CD8-positive, alpha-beta T cell (primary cell): ENCODE measurements at regions of chr6 and their contacts with region 1.

Region 1: DNA sequence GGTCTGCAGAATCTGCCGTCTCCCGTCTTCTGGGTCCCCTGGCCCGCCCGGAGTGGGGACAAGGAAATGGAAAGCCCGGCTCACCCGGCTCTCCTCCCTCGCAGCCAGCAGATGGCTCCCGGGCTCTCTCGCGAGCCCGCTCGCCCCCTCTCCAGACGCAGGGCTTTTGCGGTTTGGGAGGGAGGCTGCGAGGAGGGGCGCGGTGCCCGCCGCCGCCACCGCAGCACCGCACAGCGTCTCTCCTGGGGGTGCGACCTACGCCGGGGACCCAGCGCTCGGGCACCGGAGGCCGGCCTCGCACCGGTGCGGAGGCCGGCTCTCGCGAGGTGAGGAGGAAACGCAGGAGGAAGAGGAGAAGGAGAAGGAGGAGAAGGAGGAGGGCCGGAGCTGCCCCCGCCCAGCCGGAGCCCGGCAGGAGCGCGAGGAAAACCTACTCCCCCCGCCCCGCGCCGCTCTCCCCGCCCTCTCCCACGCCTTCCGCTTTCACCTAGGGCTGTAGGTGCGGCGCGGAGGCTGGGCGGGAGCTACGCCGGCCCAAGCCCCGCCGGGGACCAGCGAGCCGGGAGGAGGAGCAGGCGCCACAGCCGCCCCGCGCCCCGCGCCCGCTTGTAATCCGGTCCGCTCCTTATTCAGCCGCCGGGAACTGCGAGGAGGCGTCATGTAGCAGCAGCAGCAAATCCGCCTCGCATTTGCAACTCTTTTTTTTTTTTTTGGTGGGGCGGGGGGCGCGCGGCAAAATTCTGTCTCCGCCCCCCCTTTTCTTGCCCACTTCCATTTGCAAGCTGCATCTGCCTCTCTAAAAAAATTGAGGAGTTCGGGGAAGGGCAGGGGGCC is at the start of gene CARMIL1:
- DNase-seq: peak; percentile 28 to 85 (median 68)
- ATAC-seq: peak; percentile 71
- H3K4me3 ChIP-seq: peak within 1 kb of the TSS; percentile 55 to 73
- H3K4me3 Mint-ChIP-seq: peak within 1 kb of the TSS; percentile 94
- H3K27ac ChIP-seq: peak within 1 kb of the TSS in 1 of 2 experiments; percentile 54
- H3K27ac Mint-ChIP-seq: peak within 1 kb of the TSS; percentile 88
- H3K4me1 ChIP-seq: peaks cover 18% of the 10 kb centered on the region
- H3K4me1 Mint-ChIP-seq: peaks cover 37% of the 10 kb centered on the region
- H3K27me3 ChIP-seq: no peaks in the 10 kb centered on the region
- H3K27me3 Mint-ChIP-seq: peaks cover 3% of the 10 kb centered on the region
- CTCF ChIP-seq: peak; percentile 65
- total RNA-seq, gene CARMIL1: 5.0 to 6.1 TPM

Region 2: DNA sequence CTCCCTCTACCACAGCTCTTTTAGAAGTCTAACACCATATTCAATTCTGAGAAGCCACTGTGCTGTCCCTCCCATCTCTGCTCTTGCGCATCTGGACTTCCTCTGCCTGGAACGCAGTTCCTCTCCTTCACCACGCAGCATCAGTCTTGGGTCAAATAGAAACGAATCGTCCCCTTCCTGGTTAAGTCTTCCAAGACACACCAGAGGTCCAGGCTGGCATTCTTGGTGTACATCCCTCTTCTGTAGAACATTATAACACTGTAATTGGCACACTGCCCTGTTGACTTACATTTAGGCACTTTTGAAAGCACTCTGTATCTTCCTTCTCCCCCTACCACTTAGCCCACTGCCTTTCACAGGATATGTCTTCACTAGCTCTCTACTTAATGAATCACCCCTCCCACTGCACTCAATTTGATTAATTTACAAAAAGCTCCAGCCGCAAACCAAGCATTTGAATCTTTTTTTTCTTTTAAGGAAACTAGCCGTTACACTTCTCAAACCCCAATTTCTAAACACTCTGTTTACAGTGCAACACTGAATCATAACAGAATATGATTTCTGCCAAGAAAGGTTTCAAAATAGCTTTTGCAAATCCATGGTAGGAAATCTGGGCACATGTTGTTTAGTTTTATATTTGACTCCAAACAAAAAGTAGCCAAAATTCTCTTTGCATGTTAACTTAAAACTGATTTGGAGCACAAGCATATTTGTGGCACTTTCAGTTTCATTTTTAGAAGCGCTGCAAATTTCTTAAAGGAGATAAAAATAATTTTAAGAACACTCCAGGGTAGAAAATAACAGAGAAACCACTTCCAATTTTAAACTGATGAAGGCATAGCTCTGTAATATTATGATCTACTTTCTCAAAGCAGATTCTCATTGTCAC is 140.7 kb before region 1 on chr6:
- CTCF ChIA-PET with region 1: no interaction called
- POLR2A ChIA-PET with region 1: no interaction called
- intact Hi-C with region 1: loop called in 1 of 2 experiments (anchors 5 kb)
- DNase-seq: peak; percentile 8 to 88 (median 63)
- ATAC-seq: peak; percentile 90
- H3K4me3 ChIP-seq: peak overlapping the region; percentile 58 to 72
- H3K4me3 Mint-ChIP-seq: peak overlapping the region; percentile 89
- H3K27ac ChIP-seq: peak overlapping the region; percentile 70 to 85
- H3K27ac Mint-ChIP-seq: peak overlapping the region; percentile 93
- H3K4me1 ChIP-seq: peaks cover 25% of the 10 kb centered on the region
- H3K4me1 Mint-ChIP-seq: peaks cover 39% of the 10 kb centered on the region
- H3K27me3 ChIP-seq: no peaks in the 10 kb centered on the region
- H3K27me3 Mint-ChIP-seq: no peaks in the 10 kb centered on the region
- CTCF ChIP-seq: no peak

Region 3: DNA sequence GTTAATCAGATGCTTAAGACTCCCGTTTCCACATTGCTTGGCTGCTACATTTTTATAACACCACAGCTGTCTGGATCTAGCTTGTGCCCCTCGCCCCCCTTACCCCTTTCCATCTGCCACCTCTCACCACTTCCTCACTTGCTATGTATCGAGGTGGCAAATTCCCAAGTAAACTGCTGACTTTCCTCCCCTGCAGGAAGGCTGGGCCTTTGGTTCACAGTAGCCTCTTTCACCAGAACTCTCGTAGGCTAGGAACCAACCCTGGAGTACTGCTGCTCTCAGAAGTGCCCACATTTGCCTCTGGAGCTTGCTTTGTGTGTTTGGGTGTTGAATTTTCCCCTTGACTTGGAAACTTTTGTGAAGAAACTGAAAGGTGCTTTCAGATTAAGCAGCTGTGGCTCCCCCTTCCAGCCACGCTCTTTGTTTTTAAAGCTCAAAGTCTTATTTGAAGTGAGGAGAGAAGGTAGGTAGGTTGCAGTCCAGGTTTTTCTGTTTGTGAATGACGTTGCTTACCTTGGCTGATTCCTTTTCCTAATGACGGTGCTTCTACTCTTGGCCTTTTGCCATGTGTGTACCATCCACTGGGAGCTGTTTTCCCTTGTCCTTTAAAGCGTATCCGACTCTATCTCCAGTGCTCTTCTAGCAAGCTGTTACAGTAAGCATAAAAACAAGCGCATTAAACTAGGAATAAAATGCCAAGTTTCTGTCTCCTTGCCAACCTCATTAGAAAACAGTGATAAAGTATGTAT is 90.5 kb after region 1 on chr6:
- CTCF ChIA-PET with region 1: interaction called, 25 read pairs
- POLR2A ChIA-PET with region 1: interaction called, 15 read pairs
- intact Hi-C with region 1: loop called (anchors 1 to 2 kb)
- DNase-seq: peak in 6 of 9 experiments; percentile 8 to 56 (median 34)
- ATAC-seq: peak; percentile 16
- H3K4me3 ChIP-seq: peak overlapping the region in 1 of 2 experiments; percentile 10
- H3K4me3 Mint-ChIP-seq: peak overlapping the region; percentile 85
- H3K27ac ChIP-seq: peak overlapping the region; percentile 11 to 28
- H3K27ac Mint-ChIP-seq: peak overlapping the region; percentile 94
- H3K4me1 ChIP-seq: peaks cover 48% of the 10 kb centered on the region
- H3K4me1 Mint-ChIP-seq: peaks cover 81% of the 10 kb centered on the region
- H3K27me3 ChIP-seq: no peaks in the 10 kb centered on the region
- H3K27me3 Mint-ChIP-seq: no peaks in the 10 kb centered on the region
- CTCF ChIP-seq: no peak

Region 4: GRCh38 chr6:25404693-25405169 is 125.6 kb after region 1 on chr6:
- CTCF ChIA-PET with region 1: interaction called, 12 read pairs
- POLR2A ChIA-PET with region 1: interaction called, 11 read pairs
- intact Hi-C with region 1: no loop called
- DNase-seq: peak; percentile 2 to 77 (median 33)
- ATAC-seq: peak; percentile 89
- H3K4me3 ChIP-seq: peak overlapping the region; percentile 38
- H3K4me3 Mint-ChIP-seq: no peak overlapping the region
- H3K27ac ChIP-seq: peak overlapping the region; percentile 55 to 67
- H3K27ac Mint-ChIP-seq: no peak overlapping the region
- H3K4me1 ChIP-seq: peaks cover 36% of the 10 kb centered on the region
- H3K4me1 Mint-ChIP-seq: peaks cover 29% of the 10 kb centered on the region
- H3K27me3 ChIP-seq: no peaks in the 10 kb centered on the region
- H3K27me3 Mint-ChIP-seq: no peaks in the 10 kb centered on the region
- CTCF ChIP-seq: no peak

Region 5: GRCh38 chr6:25472306-25472705 is 193.2 kb after region 1 on chr6:
- CTCF ChIA-PET with region 1: interaction called, 10 read pairs
- POLR2A ChIA-PET with region 1: interaction called, 3 read pairs
- intact Hi-C with region 1: no loop called
- DNase-seq: no peak
- ATAC-seq: no peak
- H3K4me3 ChIP-seq: no peak overlapping the region
- H3K4me3 Mint-ChIP-seq: no peak overlapping the region
- H3K27ac ChIP-seq: no peak overlapping the region
- H3K27ac Mint-ChIP-seq: no peak overlapping the region
- H3K4me1 ChIP-seq: no peaks in the 10 kb centered on the region
- H3K4me1 Mint-ChIP-seq: no peaks in the 10 kb centered on the region
- H3K27me3 ChIP-seq: no peaks in the 10 kb centered on the region
- H3K27me3 Mint-ChIP-seq: no peaks in the 10 kb centered on the region
- CTCF ChIP-seq: peak; percentile 43

Region 6: GRCh38 chr6:25481277-25481676 is 202.1 kb after region 1 on chr6:
- CTCF ChIA-PET with region 1: interaction called, 157 read pairs
- POLR2A ChIA-PET with region 1: no interaction called
- intact Hi-C with region 1: no loop called
- DNase-seq: no peak
- ATAC-seq: no peak
- H3K4me3 ChIP-seq: no peak overlapping the region
- H3K4me3 Mint-ChIP-seq: no peak overlapping the region
- H3K27ac ChIP-seq: no peak overlapping the region
- H3K27ac Mint-ChIP-seq: no peak overlapping the region
- H3K4me1 ChIP-seq: no peaks in the 10 kb centered on the region
- H3K4me1 Mint-ChIP-seq: no peaks in the 10 kb centered on the region
- H3K27me3 ChIP-seq: no peaks in the 10 kb centered on the region
- H3K27me3 Mint-ChIP-seq: no peaks in the 10 kb centered on the region
- CTCF ChIP-seq: no peak

Region 7: GRCh38 chr6:25556516-25556915 is 277.4 kb after region 1 on chr6:
- CTCF ChIA-PET with region 1: interaction called, 10 read pairs
- POLR2A ChIA-PET with region 1: interaction called, 3 read pairs
- intact Hi-C with region 1: loop called (anchors 1 kb)
- DNase-seq: peak; percentile 61 to 83 (median 76)
- ATAC-seq: peak; percentile 54
- H3K4me3 ChIP-seq: no peak overlapping the region
- H3K4me3 Mint-ChIP-seq: no peak overlapping the region
- H3K27ac ChIP-seq: no peak overlapping the region
- H3K27ac Mint-ChIP-seq: no peak overlapping the region
- H3K4me1 ChIP-seq: no peaks in the 10 kb centered on the region
- H3K4me1 Mint-ChIP-seq: peaks cover 2% of the 10 kb centered on the region
- H3K27me3 ChIP-seq: no peaks in the 10 kb centered on the region
- H3K27me3 Mint-ChIP-seq: no peaks in the 10 kb centered on the region
- CTCF ChIP-seq: peak; percentile 93

Region 8: GRCh38 chr6:26457806-26458688 is 1178.9 kb after region 1 on chr6 and contains the start of gene BTN2A1:
- CTCF ChIA-PET with region 1: no interaction called
- POLR2A ChIA-PET with region 1: no interaction called
- intact Hi-C with region 1: no loop called
- DNase-seq: peak; percentile 33 to 93 (median 65)
- ATAC-seq: peak; percentile 96
- H3K4me3 ChIP-seq: peak within 1 kb of the TSS; percentile 64 to 78
- H3K4me3 Mint-ChIP-seq: peak within 1 kb of the TSS; percentile 100
- H3K27ac ChIP-seq: peak within 1 kb of the TSS; percentile 61 to 92
- H3K27ac Mint-ChIP-seq: peak within 1 kb of the TSS; percentile 99
- H3K4me1 ChIP-seq: peaks cover 48% of the 10 kb centered on the region
- H3K4me1 Mint-ChIP-seq: peaks cover 68% of the 10 kb centered on the region
- H3K27me3 ChIP-seq: no peaks in the 10 kb centered on the region
- H3K27me3 Mint-ChIP-seq: no peaks in the 10 kb centered on the region
- CTCF ChIP-seq: no peak
- total RNA-seq, gene BTN2A1: 16.4 to 17.3 TPM